Mammary epithelial cell (primary cell): ENCODE measurements at regions of chr5 and their contacts with region 1.

Region 1: GRCh38 chr5:33936004-33936380 is 194 bp upstream of the RXFP3 start:
- DNase-seq: peak; percentile 57
- H3K4me3 ChIP-seq: peak overlapping the region; percentile 4 to 33 (median 27)
- H3K27ac ChIP-seq: no peak overlapping the region
- H3K4me1 ChIP-seq: peaks cover 20% of the 10 kb centered on the region
- H3K27me3 ChIP-seq: peaks cover 28% of the 10 kb centered on the region
- CTCF ChIP-seq: peak in 1 of 2 donors; percentile 8

Region 2: DNA sequence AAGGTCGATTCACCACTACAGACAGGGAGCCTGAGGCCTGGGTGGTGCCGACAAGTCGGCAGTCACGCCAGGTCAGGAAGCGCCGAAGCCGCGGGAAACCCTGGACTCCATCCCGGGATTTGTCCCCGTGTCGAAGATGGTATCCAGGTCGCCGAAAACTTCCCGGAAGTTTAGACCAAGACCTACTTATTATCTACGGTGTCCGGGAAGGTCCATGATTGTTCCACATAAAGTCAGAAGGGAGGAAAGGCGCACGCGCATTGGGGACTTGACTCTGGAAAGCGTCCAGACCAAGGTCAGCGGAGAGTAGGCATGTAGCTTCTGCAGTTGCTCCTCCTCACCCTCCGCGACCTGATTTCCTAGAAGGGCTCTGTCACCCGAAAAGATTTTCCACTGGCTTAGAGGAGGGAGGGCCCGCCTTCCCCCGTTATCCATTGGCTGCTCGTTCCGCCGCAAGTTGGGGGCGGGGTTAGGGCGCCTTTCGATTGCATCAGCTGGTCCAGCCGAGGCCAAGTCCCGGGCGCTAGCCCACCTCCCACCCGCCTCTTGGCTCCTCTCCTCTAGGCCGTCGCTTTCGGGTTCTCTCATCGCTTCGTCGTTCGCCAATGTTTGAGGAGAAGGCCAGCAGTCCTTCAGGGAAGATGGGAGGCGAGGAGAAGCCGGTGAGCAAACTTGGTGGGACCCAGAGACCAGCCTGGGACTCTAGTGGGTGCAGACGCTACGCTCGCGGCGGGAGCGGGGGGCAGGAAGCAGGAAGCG is 495.3 kb before region 1 on chr5 and contains the start of gene TARS1:
- CTCF ChIA-PET with region 1: interaction called, 3 read pairs
- dilution Hi-C with region 1: no loop called
- in situ Hi-C with region 1: loop called in 1 of 2 experiments (anchors 10 kb)
- intact Hi-C with region 1: loop called (anchors 1 kb)
- DNase-seq: peak; percentile 100
- H3K4me3 ChIP-seq: peak within 1 kb of the TSS; percentile 70 to 83 (median 82)
- H3K27ac ChIP-seq: peak within 1 kb of the TSS; percentile 93
- H3K4me1 ChIP-seq: peaks cover 12% of the 10 kb centered on the region
- H3K27me3 ChIP-seq: no peaks in the 10 kb centered on the region
- CTCF ChIP-seq: no peak
- total RNA-seq, gene TARS1: 332 to 379 TPM

Region 3: GRCh38 chr5:33470544-33470943 is 465.4 kb before region 1 on chr5:
- CTCF ChIA-PET with region 1: no interaction called
- dilution Hi-C with region 1: no loop called
- in situ Hi-C with region 1: loop called in 1 of 2 experiments (anchors 25 kb)
- intact Hi-C with region 1: loop called (anchors 1 kb)
- DNase-seq: peak; percentile 31
- H3K4me3 ChIP-seq: no peak overlapping the region
- H3K27ac ChIP-seq: no peak overlapping the region
- H3K4me1 ChIP-seq: peaks cover 3% of the 10 kb centered on the region
- H3K27me3 ChIP-seq: no peaks in the 10 kb centered on the region
- CTCF ChIP-seq: peak in 1 of 2 donors; percentile 42

Region 4: DNA sequence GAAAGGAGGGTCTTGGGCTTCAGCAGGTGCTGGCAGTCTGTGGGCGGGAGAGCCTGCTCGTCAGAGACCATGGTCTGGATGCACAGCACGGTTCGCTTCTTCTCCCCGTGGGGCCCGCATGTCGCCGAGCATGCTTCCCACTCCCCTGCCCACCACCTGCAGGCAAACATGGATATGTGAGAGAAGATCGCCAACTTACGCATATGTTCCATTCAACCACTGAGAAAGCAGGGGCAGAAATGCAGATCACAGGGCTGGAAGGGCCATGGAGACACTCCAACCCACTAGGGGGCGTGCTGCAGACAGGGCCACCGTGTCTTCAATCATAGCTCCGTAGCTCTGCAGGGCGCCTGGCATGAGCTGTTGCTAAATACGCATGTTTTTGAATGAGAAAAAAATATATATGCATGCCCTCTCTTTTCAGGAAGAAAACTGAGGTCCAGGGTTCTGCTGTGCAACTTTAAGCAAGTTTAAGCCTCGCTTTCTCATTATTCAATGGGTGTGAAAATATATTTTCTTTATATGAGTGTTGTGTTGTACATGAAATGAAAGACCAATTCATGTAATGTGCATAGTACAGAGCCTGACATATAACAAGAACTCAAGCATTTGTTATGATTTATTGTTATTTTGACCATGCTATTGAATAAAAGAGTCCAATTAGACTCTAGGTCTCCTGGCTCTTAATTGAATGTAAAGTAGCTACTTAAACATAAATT is 347.2 kb before region 1 on chr5:
- CTCF ChIA-PET with region 1: interaction called, 3 read pairs
- dilution Hi-C with region 1: no loop called
- in situ Hi-C with region 1: no loop called
- intact Hi-C with region 1: loop called (anchors 1 kb)
- DNase-seq: no peak
- H3K4me3 ChIP-seq: no peak overlapping the region
- H3K27ac ChIP-seq: no peak overlapping the region
- H3K4me1 ChIP-seq: no peaks in the 10 kb centered on the region
- H3K27me3 ChIP-seq: no peaks in the 10 kb centered on the region
- CTCF ChIP-seq: peak; percentile 45 to 59

Region 5: DNA sequence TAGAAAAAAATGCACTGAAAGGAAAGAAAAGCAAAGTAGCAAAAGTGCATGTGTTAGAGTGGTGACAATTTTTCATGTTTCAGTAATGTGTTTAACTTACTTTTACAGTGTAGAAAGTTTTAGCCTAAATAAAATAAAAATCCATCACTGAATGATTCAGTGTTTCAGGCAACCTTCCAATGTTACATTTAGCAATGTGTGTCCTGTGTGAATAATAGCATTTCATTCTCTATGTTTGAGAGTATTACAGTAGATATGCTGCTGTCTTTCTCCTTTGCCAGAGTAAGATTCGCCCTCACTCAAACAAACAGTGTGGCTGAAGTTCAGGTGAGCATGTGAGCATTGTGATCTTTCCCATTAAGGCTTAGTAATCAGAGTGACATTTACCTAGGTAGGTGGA is 324.1 kb before region 1 on chr5:
- CTCF ChIA-PET with region 1: no interaction called
- dilution Hi-C with region 1: no loop called
- in situ Hi-C with region 1: no loop called
- intact Hi-C with region 1: loop called (anchors 10 kb)
- DNase-seq: peak; percentile 55
- H3K4me3 ChIP-seq: no peak overlapping the region
- H3K27ac ChIP-seq: peak overlapping the region; percentile 6
- H3K4me1 ChIP-seq: peaks cover 10% of the 10 kb centered on the region
- H3K27me3 ChIP-seq: no peaks in the 10 kb centered on the region
- CTCF ChIP-seq: no peak

Region 6: DNA sequence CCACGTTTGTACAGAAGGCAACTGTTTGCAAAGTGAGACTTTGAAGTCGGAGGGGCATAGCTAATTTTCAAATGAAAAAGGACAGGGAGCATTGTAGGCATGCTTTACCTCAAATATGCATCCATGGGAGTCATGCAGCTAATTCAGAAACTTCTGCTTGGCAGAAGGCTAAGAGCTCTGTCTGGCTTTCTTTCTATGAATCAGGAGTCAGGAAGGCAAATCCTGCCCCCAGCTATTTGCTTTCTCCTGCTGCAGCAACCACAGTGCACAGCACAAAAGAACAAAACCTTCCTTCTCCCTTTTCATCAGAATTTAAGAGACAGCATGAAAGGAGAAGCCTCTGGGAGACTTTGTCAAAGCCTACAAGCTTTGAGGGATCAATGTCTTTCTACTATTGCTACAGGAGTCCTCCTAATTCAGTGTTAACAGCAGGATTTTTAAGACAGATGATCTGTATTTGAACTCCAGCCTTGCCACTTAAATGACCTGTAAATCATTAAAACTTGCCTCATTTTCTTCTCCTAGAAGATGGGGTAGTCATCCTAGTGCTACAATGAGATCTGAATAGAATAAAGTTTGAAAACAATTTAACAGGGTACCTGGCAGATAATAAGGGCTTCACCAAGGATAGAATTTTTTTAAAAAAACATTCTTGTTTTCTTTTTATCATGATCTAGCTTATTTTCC is 286.1 kb before region 1 on chr5:
- CTCF ChIA-PET with region 1: interaction called, 6 read pairs
- dilution Hi-C with region 1: no loop called
- in situ Hi-C with region 1: no loop called
- intact Hi-C with region 1: loop called (anchors 10 kb)
- DNase-seq: peak; percentile 85
- H3K4me3 ChIP-seq: no peak overlapping the region
- H3K27ac ChIP-seq: peak overlapping the region; percentile 37
- H3K4me1 ChIP-seq: peaks cover 20% of the 10 kb centered on the region
- H3K27me3 ChIP-seq: no peaks in the 10 kb centered on the region
- CTCF ChIP-seq: no peak

Region 7: DNA sequence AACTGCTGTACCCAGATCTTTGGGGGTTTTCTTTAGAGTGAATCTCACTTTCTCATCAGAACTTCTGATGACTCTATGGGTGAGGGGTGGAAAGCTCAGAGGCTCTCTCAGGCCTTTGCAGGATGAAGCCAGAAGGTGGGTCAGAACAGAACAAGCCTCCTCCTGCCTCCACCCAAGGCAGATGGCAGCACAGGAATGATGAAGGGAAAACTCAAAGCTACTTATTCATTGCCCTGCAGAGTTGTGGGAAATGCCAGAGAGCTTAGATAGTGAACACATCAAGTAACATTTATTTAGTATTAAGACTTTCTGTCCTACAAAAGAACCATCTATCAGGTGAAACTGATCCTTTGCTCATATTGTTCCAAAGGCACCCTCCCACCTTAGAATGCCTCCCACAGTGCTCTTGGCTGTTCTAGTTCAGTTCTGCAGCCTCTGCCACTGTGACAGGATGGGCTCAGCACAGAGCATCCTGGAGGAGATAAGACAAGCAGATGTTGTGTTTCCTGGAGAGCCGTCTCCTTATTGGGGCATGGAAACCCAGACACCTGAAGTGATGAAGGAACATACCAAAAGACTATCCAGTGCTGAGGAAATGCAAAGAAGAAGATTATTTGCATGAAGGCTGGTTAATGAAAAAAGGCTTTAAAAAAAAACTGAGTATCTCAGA is 190.8 kb before region 1 on chr5:
- CTCF ChIA-PET with region 1: no interaction called
- dilution Hi-C with region 1: no loop called
- in situ Hi-C with region 1: no loop called
- intact Hi-C with region 1: loop called (anchors 5 kb)
- DNase-seq: no peak
- H3K4me3 ChIP-seq: no peak overlapping the region
- H3K27ac ChIP-seq: no peak overlapping the region
- H3K4me1 ChIP-seq: no peaks in the 10 kb centered on the region
- H3K27me3 ChIP-seq: no peaks in the 10 kb centered on the region
- CTCF ChIP-seq: no peak

Region 8: DNA sequence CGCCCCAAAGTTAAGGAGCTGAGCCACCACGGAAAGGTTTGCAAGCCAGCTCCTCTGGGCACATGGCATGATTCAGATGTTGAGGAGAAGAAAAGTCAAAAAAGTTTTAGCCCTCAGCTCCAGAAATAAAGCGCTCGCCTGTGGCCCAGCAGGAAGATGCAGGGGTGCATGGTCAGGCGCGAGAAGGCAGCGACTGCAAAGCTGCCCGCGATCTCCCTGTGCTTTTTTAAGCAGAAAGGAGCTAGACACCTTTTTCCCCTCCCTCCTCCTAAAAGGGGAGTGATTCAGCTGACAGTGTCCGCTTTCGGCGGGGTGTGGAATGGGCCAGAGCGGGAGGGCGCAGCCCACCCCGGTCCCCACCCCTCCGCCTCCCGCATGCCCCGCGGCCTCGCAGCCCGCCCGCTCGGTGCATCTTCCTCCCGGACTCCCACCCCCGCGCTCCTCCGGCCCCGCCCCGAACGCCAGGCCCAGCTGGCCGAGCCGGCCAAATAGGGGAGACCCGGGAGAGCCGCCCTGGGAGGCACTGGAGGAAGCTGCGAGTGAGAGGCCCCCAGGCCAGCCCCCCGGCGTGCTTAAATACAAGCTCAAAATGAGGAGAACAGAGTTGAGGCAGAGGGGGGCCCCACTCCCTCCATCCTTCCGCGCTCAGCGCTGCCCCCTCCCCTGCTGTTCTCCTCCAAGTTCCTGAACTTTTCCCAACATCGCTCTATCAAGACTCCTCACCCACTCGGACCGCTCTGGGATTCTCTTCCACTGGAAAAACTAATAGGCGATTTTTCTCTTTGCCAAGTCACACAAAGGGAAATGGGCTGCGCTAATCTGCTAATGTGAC is 44.0 kb before region 1 on chr5 and contains the start of gene ADAMTS12:
- CTCF ChIA-PET with region 1: no interaction called
- dilution Hi-C with region 1: no loop called
- in situ Hi-C with region 1: no loop called
- intact Hi-C with region 1: no loop called
- DNase-seq: peak; percentile 49
- H3K4me3 ChIP-seq: peak within 1 kb of the TSS; percentile 15 to 58 (median 31)
- H3K27ac ChIP-seq: peak within 1 kb of the TSS; percentile 26
- H3K4me1 ChIP-seq: peaks cover 7% of the 10 kb centered on the region
- H3K27me3 ChIP-seq: no peaks in the 10 kb centered on the region
- CTCF ChIP-seq: no peak
- total RNA-seq, gene ADAMTS12: 3.7 to 17.8 TPM